Activated naive CD4-positive, alpha-beta T cell treated with anti-CD3 and anti-CD28 coated beads for 36 hours (primary cell): ENCODE measurements at regions of chrX and their contacts with region 1.

Region 1: DNA sequence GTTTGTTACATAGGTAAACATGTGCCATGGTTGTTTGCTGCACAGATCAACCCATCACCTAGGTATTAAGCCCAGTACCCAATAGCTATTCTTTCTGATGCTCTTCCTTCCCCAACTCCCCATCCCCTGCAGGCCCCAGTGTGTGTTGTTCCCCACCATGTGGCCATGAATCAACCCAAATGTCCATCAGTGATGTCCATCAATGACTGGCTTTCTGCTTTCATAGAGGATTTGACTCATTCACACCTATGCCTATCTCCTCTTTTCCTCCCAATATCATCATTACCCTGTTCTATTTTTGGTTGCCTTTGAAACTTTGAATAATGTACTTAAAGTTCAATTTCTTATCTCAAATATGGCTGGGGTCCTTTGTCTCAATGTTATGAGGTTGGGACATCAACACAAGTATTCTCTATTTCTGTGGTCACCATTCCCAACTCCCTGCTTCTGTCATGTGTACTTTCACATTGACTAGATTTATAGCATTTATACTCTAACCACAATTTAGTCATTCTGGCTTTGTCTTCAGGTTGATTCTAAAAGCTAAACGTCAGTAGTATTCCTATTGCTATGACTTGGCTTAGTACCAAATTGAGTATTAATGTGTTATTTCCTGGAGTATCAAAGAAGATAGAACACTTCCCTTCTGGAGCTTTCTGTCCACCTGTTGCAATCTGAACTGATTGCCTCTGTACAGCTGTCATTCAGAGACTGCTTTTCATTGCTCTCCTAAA is 107.2 kb downstream of the TAB3 start:
- DNase-seq: no peak
- H3K4me3 Mint-ChIP-seq: no peak overlapping the region
- H3K27ac Mint-ChIP-seq: no peak overlapping the region
- H3K4me1 Mint-ChIP-seq: peaks cover 21% of the 10 kb centered on the region
- H3K27me3 Mint-ChIP-seq: peaks cover 2% of the 10 kb centered on the region

Region 2: DNA sequence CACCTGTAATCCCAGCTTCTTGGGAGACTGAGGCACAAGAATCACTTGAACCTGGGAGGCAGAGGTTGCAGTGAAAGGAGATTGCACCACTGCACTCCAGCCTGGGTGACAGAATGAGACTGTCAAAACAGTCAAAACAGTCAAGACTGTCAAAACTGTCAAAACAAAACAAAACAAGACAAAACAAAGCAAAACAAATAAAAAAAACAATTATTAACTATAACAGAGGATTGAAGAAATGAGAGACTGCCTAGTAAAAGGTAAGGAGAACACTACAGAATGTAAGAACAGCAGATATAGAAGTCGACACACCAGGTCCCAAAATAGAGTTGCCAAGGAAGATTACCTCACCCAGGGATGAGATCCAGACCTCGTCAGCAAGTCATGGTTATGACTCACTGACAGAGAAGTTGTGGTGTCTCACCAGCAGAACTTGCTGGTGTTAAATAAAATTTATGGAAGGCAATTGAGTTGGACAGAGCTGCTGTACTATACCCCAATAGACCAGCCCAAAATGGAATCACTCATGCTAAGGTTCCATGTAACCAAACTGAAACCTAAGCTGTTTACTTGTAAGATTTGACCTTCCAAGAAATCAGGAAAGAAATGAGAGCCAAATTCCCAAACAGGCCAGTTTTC is 160.8 kb before region 1 on chrX:
- CTCF ChIA-PET with region 1: no interaction called
- intact Hi-C with region 1: loop called (anchors 5 kb)
- DNase-seq: no peak
- H3K4me3 Mint-ChIP-seq: no peak overlapping the region
- H3K27ac Mint-ChIP-seq: no peak overlapping the region
- H3K4me1 Mint-ChIP-seq: no peaks in the 10 kb centered on the region
- H3K27me3 Mint-ChIP-seq: no peaks in the 10 kb centered on the region

Region 3: GRCh38 chrX:30652527-30653414 is 129.1 kb before region 1 on chrX:
- CTCF ChIA-PET with region 1: no interaction called
- intact Hi-C with region 1: loop called (anchors 1 kb)
- DNase-seq: peak; percentile 93
- H3K4me3 Mint-ChIP-seq: peak overlapping the region; percentile 90
- H3K27ac Mint-ChIP-seq: peak overlapping the region; percentile 93
- H3K4me1 Mint-ChIP-seq: peaks cover 31% of the 10 kb centered on the region
- H3K27me3 Mint-ChIP-seq: no peaks in the 10 kb centered on the region

Region 4: GRCh38 chrX:30659421-30659820 is 122.5 kb before region 1 on chrX:
- CTCF ChIA-PET with region 1: no interaction called
- intact Hi-C with region 1: loop called (anchors 1 kb)
- DNase-seq: no peak
- H3K4me3 Mint-ChIP-seq: peak overlapping the region; percentile 29
- H3K27ac Mint-ChIP-seq: peak overlapping the region; percentile 85
- H3K4me1 Mint-ChIP-seq: peaks cover 34% of the 10 kb centered on the region
- H3K27me3 Mint-ChIP-seq: no peaks in the 10 kb centered on the region

Region 5: DNA sequence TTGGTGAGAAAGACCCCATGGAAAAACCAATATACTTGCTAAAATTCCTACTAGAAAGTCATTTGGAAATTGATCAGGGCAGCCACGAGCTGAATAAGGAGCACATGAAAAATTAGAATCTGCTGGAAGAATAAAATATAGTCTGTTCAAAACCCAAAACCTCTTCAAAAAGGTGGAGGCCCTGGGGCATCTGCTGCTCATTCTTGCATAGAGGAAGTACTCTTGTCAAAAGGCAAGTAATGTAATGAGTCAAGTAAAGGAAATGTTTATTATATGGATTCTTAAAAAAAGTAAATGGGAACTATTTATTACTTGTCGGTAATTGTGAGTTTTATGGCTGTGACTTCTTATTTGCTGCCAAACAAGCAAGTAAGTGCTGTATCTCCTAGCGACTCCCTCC is 19.1 kb before region 1 on chrX:
- CTCF ChIA-PET with region 1: no interaction called
- intact Hi-C with region 1: loop called (anchors 1 kb)
- DNase-seq: peak; percentile 18
- H3K4me3 Mint-ChIP-seq: no peak overlapping the region
- H3K27ac Mint-ChIP-seq: no peak overlapping the region
- H3K4me1 Mint-ChIP-seq: peaks cover 16% of the 10 kb centered on the region
- H3K27me3 Mint-ChIP-seq: no peaks in the 10 kb centered on the region

Region 6: GRCh38 chrX:30831082-30831481 is 49.2 kb after region 1 on chrX:
- CTCF ChIA-PET with region 1: no interaction called
- intact Hi-C with region 1: loop called (anchors 1 kb)
- DNase-seq: peak; percentile 48
- H3K4me3 Mint-ChIP-seq: no peak overlapping the region
- H3K27ac Mint-ChIP-seq: peak overlapping the region; percentile 12
- H3K4me1 Mint-ChIP-seq: peaks cover 34% of the 10 kb centered on the region
- H3K27me3 Mint-ChIP-seq: no peaks in the 10 kb centered on the region